ENCODE measurements at regions of chr11 and their contacts with region 1.

Region 1: GRCh38 chr11:108154591-108154990 is 33.2 kb downstream of the ACAT1 start:
- DNase-seq: no peak
- H3K4me3 Mint-ChIP-seq: no peak overlapping the region
- H3K27ac Mint-ChIP-seq: no peak overlapping the region
- H3K4me1 Mint-ChIP-seq: no peaks in the 10 kb centered on the region
- H3K27me3 Mint-ChIP-seq: no peaks in the 10 kb centered on the region

Region 2: DNA sequence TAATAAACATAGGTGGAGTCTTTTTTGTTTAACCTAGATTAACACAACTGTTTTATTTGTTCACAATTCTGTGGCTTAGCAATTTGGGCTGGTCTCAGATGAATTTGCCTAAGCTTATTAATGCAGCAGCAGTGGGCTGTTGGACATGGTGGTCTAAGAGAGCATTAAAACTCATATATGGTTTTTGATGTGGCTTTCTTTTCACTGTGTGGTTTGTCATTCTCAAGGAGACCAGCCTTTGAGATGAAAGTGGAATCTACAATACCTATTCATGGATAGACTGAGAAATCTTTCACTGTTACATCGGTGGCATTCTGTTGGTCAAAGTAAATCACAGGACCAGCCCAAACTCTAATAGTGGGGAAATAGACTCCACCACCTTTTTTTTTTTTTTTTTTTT is 106.3 kb before region 1 on chr11:
- intact Hi-C with region 1: no loop called
- DNase-seq: no peak
- H3K4me3 Mint-ChIP-seq: no peak overlapping the region
- H3K27ac Mint-ChIP-seq: no peak overlapping the region
- H3K4me1 Mint-ChIP-seq: no peaks in the 10 kb centered on the region
- H3K27me3 Mint-ChIP-seq: no peaks in the 10 kb centered on the region

Region 3: GRCh38 chr11:108193725-108194124 is 39.1 kb after region 1 on chr11:
- intact Hi-C with region 1: loop called (anchors 5 kb)
- DNase-seq: no peak
- H3K4me3 Mint-ChIP-seq: no peak overlapping the region
- H3K27ac Mint-ChIP-seq: no peak overlapping the region
- H3K4me1 Mint-ChIP-seq: peaks cover 20% of the 10 kb centered on the region
- H3K27me3 Mint-ChIP-seq: no peaks in the 10 kb centered on the region